A673 (cell line): ENCODE measurements at regions of chr19 and their contacts with region 1.

Region 1: DNA sequence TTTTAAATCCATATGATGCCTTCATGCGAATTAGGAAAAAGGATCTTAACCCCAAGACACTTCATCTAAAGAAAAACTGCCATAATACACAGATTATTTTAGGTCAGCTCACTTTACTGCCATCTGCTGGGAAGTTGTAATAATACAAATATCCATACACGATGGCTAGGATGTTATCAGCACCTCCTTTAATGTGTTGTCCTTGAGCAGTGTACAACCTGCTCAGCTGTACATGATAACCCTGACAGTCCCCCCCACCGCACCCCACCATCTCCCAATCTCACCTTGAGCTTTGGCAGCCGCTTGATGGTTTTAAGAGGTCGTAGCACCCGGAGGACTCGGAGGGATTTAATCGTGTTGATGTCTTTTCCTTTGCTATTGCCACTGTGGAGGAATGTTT is 112.2 kb downstream of the IER2 start:
- DNase-seq: peak; percentile 71
- H3K4me3 ChIP-seq: no peak overlapping the region
- H3K27ac ChIP-seq: no peak overlapping the region
- H3K4me1 ChIP-seq: no peaks in the 10 kb centered on the region
- H3K27me3 ChIP-seq: no peaks in the 10 kb centered on the region
- CTCF ChIP-seq: peak; percentile 65

Region 2: GRCh38 chr19:13150187-13150930 is 112.1 kb before region 1 on chr19 and contains the starts of genes IER2 and STX10:
- CTCF ChIA-PET with region 1: interaction called, 5 read pairs
- POLR2A ChIA-PET with region 1: interaction called, 12 read pairs
- intact Hi-C with region 1: no loop called
- DNase-seq: peak; percentile 97
- H3K4me3 ChIP-seq: peak within 1 kb of the TSS; percentile 72
- H3K27ac ChIP-seq: peak within 1 kb of the TSS; percentile 98
- H3K4me1 ChIP-seq: peaks cover 6% of the 10 kb centered on the region
- H3K27me3 ChIP-seq: no peaks in the 10 kb centered on the region
- CTCF ChIP-seq: peak; percentile 55
- total RNA-seq, gene IER2: 148 and 164 TPM in 2 replicates
- total RNA-seq, gene STX10: 63.3 and 69.5 TPM in 2 replicates

Region 3: GRCh38 chr19:13195678-13196077 is 66.8 kb before region 1 on chr19:
- CTCF ChIA-PET with region 1: interaction called, 7 read pairs
- POLR2A ChIA-PET with region 1: no interaction called
- intact Hi-C with region 1: loop called (anchors 1 kb)
- DNase-seq: no peak
- H3K4me3 ChIP-seq: no peak overlapping the region
- H3K27ac ChIP-seq: no peak overlapping the region
- H3K4me1 ChIP-seq: no peaks in the 10 kb centered on the region
- H3K27me3 ChIP-seq: no peaks in the 10 kb centered on the region
- CTCF ChIP-seq: no peak

Region 4: DNA sequence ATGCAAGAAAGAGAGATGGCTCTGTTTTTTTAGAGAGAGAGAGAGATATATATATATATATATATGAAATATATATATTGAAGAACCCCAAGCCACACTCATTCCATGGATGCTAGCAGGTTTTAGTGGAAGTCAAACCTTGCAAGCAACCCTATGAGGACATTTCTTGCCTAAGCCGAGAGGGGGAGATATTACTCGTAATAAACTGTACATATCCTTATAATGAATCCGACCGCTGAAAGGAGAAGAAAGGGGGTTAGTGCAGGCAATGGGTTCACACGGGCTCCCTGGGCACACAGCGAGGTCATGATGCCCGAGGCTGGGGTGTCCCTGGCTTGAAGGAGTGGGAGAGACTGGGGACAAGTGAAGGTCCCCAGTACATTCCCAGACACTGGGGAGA is 33.9 kb before region 1 on chr19:
- CTCF ChIA-PET with region 1: interaction called, 15 read pairs
- POLR2A ChIA-PET with region 1: no interaction called
- intact Hi-C with region 1: no loop called
- DNase-seq: peak; percentile 54
- H3K4me3 ChIP-seq: no peak overlapping the region
- H3K27ac ChIP-seq: no peak overlapping the region
- H3K4me1 ChIP-seq: peaks cover 7% of the 10 kb centered on the region
- H3K27me3 ChIP-seq: no peaks in the 10 kb centered on the region
- CTCF ChIP-seq: peak; percentile 43